ENCODE measurements at regions of chr10 and their contacts with region 1.

Region 1: GRCh38 chr10:97217299-97217698 is 31.5 kb upstream of the SLIT1 start:
- DNase-seq: no peak
- H3K4me3 Mint-ChIP-seq: no peak overlapping the region
- H3K27ac Mint-ChIP-seq: no peak overlapping the region
- H3K4me1 Mint-ChIP-seq: peaks cover 30% of the 10 kb centered on the region
- H3K27me3 Mint-ChIP-seq: no peaks in the 10 kb centered on the region

Region 2: DNA sequence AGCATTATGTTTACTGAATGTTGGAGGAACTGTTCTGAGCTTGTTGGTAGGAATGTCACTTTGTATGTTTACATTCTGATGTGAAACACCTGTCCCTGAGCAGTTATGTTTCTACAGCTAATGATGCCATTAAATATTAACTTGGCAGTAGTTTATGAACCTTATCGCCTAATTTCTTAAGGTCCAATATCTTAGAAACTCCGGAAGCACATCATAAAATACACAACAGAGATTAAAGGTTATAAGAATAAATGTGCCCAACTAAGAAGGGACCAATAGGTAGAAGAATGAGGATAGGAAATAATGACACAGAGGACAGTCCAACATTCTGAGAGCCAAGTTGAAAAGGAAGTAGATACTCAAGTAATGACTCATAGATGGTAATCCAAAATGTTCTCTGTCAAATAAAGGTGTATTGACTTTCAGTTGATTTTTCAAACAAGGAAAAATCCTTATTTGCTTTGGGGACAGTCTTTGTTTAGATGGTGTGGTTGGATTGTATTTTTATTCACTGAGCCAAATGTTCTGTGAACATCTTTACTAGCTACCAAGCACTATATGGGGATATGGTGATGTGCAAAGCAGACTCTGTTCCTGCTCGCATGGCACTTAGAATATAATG is 353.3 kb before region 1 on chr10:
- CTCF ChIA-PET with region 1: no interaction called
- POLR2A ChIA-PET with region 1: no interaction called
- DNase-seq: no peak
- H3K4me3 Mint-ChIP-seq: no peak overlapping the region
- H3K27ac Mint-ChIP-seq: peak overlapping the region; percentile 3
- H3K4me1 Mint-ChIP-seq: peaks cover 15% of the 10 kb centered on the region
- H3K27me3 Mint-ChIP-seq: no peaks in the 10 kb centered on the region

Region 3: GRCh38 chr10:97072851-97073665 is 144.2 kb before region 1 on chr10:
- CTCF ChIA-PET with region 1: interaction called, 38 read pairs
- POLR2A ChIA-PET with region 1: no interaction called
- DNase-seq: peak; percentile 83
- H3K4me3 Mint-ChIP-seq: no peak overlapping the region
- H3K27ac Mint-ChIP-seq: no peak overlapping the region
- H3K4me1 Mint-ChIP-seq: peaks cover 13% of the 10 kb centered on the region
- H3K27me3 Mint-ChIP-seq: peaks cover 10% of the 10 kb centered on the region

Region 4: GRCh38 chr10:97311227-97311626 is 93.9 kb after region 1 on chr10:
- CTCF ChIA-PET with region 1: no interaction called
- POLR2A ChIA-PET with region 1: no interaction called
- DNase-seq: no peak
- H3K4me3 Mint-ChIP-seq: no peak overlapping the region
- H3K27ac Mint-ChIP-seq: no peak overlapping the region
- H3K4me1 Mint-ChIP-seq: no peaks in the 10 kb centered on the region
- H3K27me3 Mint-ChIP-seq: no peaks in the 10 kb centered on the region